Activated CD4-positive, alpha-beta T cell treated with anti-CD3 and anti-CD28 coated beads, Interleukin-2, amount 10 ng/mL, durations not matched to agents 7 days and 5 days (primary cell): ENCODE measurements at regions of chr9 and their contacts with region 1.

Region 1: DNA sequence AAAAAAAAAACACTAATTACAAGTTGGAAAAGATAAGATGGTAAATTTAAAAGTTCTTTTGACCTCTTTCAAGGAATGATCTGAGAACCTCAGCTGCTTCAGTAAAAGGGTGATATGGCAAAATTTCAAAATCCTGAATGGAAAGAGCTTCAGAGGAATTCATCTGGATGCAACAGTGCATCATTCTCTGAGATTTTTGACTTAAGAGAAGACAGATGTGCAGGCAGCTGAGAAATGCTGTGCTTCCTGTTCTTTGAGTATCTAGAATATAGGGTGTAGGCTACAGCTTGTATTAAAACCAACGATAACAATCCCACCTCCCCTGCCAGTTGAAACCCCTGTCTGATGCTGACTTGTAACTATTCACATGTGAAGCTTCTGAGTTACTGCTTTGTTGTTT is 6.2 kb downstream of the FRMPD1 start:
- DNase-seq: no peak
- H3K4me3 Mint-ChIP-seq: no peak overlapping the region
- H3K27ac Mint-ChIP-seq: no peak overlapping the region
- H3K4me1 Mint-ChIP-seq: no peaks in the 10 kb centered on the region
- H3K27me3 Mint-ChIP-seq: peaks cover 37% of the 10 kb centered on the region

Region 2: DNA sequence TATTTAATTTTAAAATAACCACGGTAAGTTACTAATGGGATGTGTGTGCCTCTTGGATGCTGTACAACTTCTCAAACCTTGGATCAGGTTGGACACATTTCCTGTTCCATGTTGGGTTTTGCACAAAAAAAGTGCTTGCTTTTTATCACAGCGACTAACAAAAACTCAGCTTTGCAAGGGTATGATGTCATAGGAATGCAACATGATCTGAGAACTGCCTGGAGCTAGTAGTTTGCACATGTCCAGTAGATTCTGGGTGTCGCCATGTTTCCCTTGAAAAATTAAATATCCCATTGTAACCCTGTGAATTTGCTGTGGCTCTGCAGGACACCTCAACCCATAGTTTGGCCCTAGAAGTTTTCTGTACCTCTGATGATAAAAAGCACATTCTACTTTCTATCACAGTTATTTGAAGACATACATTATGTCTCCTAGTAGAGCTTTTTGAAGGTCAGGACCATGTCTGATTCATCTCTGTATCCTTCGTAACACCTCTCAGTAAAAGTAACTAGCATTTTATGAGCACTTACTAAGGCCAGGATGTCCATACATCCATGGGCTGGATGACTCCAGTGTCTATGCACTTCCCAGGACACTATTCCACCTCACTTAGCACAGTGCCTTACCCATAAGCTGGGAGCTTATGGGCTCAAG is 17.7 kb before region 1 on chr9:
- CTCF ChIA-PET with region 1: interaction called, 14 read pairs
- POLR2A ChIA-PET with region 1: no interaction called
- DNase-seq: no peak
- H3K4me3 Mint-ChIP-seq: no peak overlapping the region
- H3K27ac Mint-ChIP-seq: no peak overlapping the region
- H3K4me1 Mint-ChIP-seq: no peaks in the 10 kb centered on the region
- H3K27me3 Mint-ChIP-seq: peaks cover 20% of the 10 kb centered on the region

Region 3: DNA sequence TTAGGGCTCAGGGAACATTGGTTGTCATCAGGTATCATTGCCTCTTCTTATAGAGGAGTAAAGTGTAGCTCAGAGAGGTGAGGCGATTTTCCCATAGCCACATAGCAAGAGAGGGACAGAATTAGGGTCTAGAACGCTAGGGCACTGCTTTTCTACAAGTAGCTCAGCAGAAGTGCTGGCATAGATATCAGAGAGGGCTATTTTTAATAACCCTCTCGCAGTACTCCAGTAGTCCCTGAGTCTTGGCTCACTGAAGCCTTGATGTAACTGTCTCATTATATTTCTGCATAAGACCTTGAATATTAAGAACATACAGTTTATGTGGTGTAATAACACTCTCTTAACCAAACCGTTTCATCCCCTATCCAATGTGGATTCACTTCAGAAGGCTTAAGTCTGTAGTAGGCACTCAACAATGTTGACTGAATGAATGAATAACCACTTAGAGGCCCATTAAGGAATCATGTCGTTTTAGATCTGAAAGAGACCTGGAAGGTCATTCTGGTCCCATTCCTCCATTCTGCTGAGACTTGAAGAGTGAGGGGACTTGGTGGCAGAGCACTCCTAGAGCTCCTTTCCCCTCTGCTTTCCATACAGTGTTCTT is 10.9 kb before region 1 on chr9:
- CTCF ChIA-PET with region 1: interaction called, 14 read pairs
- POLR2A ChIA-PET with region 1: no interaction called
- DNase-seq: no peak
- H3K4me3 Mint-ChIP-seq: no peak overlapping the region
- H3K27ac Mint-ChIP-seq: no peak overlapping the region
- H3K4me1 Mint-ChIP-seq: peaks cover 3% of the 10 kb centered on the region
- H3K27me3 Mint-ChIP-seq: peaks cover 66% of the 10 kb centered on the region